MCF 10A (cell line): ENCODE measurements at regions of chr2 and their contacts with region 1.

Region 1: DNA sequence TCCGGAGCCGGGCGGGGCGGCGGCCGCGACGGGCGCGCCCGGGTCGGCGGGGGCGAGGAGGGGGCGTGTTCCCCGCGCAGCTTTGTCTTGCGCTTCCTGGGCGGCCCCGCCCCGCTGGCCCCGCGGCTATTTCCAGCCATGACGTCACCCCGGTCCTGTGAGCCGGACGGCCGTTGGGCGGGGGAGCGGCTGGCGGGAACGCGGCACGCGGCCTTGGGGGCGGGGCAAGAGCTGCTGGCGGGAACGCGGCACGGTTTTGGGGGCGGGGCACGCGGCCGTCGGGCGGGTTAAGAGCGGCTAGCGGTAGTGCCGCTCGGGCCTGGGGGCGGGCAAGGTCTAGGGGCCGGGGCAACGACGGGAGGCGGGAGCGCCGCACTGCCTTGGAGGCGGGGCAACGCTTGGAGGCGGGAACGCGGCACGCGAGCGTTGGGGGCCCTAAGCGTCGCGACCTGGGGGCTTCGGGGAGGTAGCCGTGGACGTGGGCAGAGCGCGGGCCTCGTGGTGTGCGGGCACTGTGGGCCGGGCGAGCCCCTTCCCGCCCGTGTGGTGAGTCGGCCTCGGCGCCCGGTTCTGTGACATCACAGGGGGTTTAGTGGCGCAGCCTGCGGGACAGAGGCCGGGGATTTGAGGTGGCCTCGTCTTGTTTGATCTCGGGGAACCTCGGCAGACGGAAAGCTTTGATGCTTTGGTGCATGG is 704 bp downstream of the KLF11 start:
- DNase-seq: peak; percentile 92
- H3K4me3 Mint-ChIP-seq: peak overlapping the region; percentile 73
- H3K27ac Mint-ChIP-seq: peak overlapping the region; percentile 75
- H3K4me1 Mint-ChIP-seq: peaks cover 4% of the 10 kb centered on the region
- H3K27me3 Mint-ChIP-seq: no peaks in the 10 kb centered on the region
- CTCF ChIP-seq: no peak

Region 2: GRCh38 chr2:9770308-9771100 is 273.6 kb before region 1 on chr2:
- CTCF ChIA-PET with region 1: interaction called, 11 read pairs
- POLR2A ChIA-PET with region 1: interaction called, 3 read pairs
- intact Hi-C with region 1: no loop called
- DNase-seq: peak; percentile 89
- H3K4me3 Mint-ChIP-seq: peak overlapping the region; percentile 39
- H3K27ac Mint-ChIP-seq: no peak overlapping the region
- H3K4me1 Mint-ChIP-seq: peaks cover 26% of the 10 kb centered on the region
- H3K27me3 Mint-ChIP-seq: no peaks in the 10 kb centered on the region
- CTCF ChIP-seq: peak; percentile 69

Region 3: DNA sequence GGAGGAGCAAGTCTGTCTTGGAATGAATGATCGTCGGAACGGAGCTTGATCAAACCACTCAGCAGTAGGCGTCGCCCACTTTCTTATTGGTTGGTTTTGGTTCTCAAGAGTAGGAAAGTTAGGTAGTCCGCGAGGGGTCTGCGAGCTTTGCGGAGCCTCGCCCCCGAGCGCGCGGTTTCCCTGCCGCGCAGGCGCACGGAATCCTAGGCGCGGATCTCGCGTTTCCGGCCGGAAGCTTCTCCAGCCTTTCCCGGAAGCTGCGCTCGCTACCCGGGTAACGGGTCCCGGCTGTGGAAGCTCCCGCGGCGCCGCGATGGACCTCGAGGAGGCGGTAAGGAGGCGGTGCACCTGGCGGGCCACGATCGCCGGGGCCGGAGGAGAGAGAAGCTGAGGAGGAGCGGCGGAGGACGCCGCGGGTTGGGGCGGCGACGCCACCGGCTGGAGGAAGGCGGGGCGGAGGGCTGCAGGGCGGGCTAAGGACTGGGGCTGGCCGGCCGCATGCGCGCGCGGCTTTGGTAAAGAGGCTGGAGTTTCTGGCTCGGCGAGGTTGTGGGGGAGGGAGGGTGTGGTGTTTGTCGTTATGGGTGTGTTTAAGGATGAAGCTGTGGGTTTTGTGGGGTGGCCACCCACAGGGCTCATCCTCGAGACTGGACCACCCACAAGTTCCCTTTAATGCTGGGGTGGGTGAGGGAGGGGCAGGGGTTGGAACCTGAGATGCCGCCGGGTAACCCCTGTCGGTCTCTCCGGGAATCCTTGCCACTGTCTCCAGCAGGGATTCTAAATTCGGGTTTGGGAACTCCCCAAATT is 200.6 kb before region 1 on chr2 and contains the start of gene TAF1B:
- CTCF ChIA-PET with region 1: interaction called, 4 read pairs
- POLR2A ChIA-PET with region 1: interaction called, 11 read pairs
- intact Hi-C with region 1: no loop called
- DNase-seq: peak; percentile 94
- H3K4me3 Mint-ChIP-seq: peak within 1 kb of the TSS; percentile 82
- H3K27ac Mint-ChIP-seq: peak within 1 kb of the TSS; percentile 92
- H3K4me1 Mint-ChIP-seq: peaks cover 40% of the 10 kb centered on the region
- H3K27me3 Mint-ChIP-seq: no peaks in the 10 kb centered on the region
- CTCF ChIP-seq: no peak
- total RNA-seq, gene TAF1B: 19.7 and 25.5 TPM in 2 replicates

Region 4: DNA sequence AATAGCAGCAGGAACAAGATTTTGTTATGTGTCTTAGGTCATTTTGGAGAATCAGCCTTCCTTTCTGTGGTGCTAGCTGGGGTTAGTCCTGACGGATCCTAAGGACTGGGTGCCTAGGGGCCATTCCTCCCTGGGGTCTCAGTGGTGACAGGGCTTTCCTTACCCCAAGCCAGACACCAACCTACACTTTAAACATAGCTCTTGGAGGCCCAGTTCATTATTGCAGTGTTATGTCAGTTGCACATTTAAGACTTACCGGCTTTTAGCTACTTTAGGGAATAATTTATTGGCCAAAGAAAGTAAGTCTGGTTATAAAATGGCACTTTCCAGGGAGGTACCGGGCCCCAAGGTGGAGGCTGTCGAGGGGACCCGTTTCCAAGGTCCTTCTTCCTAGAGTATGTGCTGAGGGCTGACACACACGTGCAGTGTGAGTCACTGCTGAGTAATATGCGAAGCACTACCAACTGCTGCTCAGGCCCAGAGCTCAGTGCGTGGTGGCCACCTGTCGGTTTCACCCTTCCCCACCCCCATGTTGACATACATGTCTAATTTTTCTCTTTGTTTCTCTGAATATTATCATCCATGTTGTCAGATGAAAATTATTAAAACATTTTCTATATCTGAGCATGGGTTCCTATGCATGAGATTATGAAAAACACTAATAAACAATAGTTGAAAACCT is 129.5 kb before region 1 on chr2:
- CTCF ChIA-PET with region 1: interaction called, 3 read pairs
- POLR2A ChIA-PET with region 1: interaction called, 3 read pairs
- intact Hi-C with region 1: loop called (anchors 1 kb)
- DNase-seq: peak; percentile 92
- H3K4me3 Mint-ChIP-seq: no peak overlapping the region
- H3K27ac Mint-ChIP-seq: peak overlapping the region; percentile 64
- H3K4me1 Mint-ChIP-seq: peaks cover 10% of the 10 kb centered on the region
- H3K27me3 Mint-ChIP-seq: no peaks in the 10 kb centered on the region
- CTCF ChIP-seq: peak; percentile 65

Region 5: GRCh38 chr2:9951272-9951972 is 92.6 kb before region 1 on chr2 and contains the start of gene GRHL1:
- CTCF ChIA-PET with region 1: no interaction called
- POLR2A ChIA-PET with region 1: no interaction called
- intact Hi-C with region 1: no loop called
- DNase-seq: peak; percentile 91
- H3K4me3 Mint-ChIP-seq: peak within 1 kb of the TSS; percentile 74
- H3K27ac Mint-ChIP-seq: no peak within 1 kb of the TSS
- H3K4me1 Mint-ChIP-seq: peaks cover 6% of the 10 kb centered on the region
- H3K27me3 Mint-ChIP-seq: no peaks in the 10 kb centered on the region
- CTCF ChIP-seq: no peak
- total RNA-seq, gene GRHL1: 0.96 and 2.0 TPM in 2 replicates

Region 6: DNA sequence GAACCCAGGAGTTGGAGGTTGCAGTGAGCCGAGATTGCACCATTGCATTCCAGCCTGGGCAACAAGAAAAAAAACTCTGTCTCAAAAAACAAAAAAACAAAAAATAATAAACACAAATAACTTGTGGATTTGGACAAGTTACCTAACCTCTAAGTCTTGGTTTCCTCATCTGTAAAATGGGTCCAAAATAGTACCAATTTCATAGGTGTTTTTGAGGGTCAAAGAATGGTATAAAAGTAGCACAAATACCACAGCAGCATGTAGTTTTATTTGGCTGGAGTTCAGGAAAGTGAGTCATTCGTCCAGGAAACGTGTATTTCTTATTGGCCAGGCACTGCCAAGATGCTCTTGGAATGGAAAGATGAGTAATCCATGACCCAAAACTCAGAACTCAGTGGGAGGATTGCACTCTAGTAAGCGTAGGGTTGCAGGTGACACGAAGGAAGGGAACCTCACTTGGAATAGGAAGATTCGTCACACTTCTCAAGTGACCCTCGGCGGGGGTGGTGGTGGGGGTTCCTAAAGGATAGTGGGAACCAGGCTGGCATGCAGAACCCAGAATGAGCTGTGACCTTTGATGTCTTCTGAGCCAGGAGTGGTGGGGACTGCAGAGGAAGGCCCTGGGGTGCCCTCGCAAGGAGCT is 68.1 kb before region 1 on chr2:
- CTCF ChIA-PET with region 1: interaction called, 81 read pairs
- POLR2A ChIA-PET with region 1: no interaction called
- intact Hi-C with region 1: loop called (anchors 1 kb)
- DNase-seq: peak; percentile 99
- H3K4me3 Mint-ChIP-seq: no peak overlapping the region
- H3K27ac Mint-ChIP-seq: no peak overlapping the region
- H3K4me1 Mint-ChIP-seq: peaks cover 30% of the 10 kb centered on the region
- H3K27me3 Mint-ChIP-seq: no peaks in the 10 kb centered on the region
- CTCF ChIP-seq: no peak

Region 7: DNA sequence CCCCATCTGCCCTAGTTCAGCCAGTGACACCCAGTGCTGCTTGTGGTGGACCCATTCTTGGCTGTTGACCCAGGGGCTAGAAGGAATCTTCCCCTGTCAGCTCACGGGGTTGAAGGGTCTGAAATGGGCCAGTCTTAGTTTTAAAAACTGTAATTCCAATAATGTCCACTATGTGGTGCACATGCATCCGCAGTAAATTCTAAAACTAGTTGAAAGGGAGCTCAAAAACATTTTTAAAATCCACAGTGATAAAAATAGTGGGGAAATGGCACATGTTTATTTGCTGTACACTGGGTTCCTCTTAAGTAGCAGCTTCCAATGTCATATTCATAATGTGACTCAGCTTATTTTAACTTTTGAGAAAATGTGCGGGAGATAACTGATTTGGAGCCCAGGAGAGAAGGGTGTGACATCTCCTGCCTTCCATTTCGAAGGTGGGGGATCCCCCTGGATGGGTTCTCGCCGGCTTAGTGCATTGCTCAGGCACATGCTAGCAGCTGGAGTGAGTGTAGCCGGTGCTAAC is 59.8 kb before region 1 on chr2:
- CTCF ChIA-PET with region 1: interaction called, 81 read pairs
- POLR2A ChIA-PET with region 1: interaction called, 5 read pairs
- intact Hi-C with region 1: loop called (anchors 1 kb)
- DNase-seq: peak; percentile 62
- H3K4me3 Mint-ChIP-seq: no peak overlapping the region
- H3K27ac Mint-ChIP-seq: no peak overlapping the region
- H3K4me1 Mint-ChIP-seq: no peaks in the 10 kb centered on the region
- H3K27me3 Mint-ChIP-seq: no peaks in the 10 kb centered on the region
- CTCF ChIP-seq: peak; percentile 63

Region 8: DNA sequence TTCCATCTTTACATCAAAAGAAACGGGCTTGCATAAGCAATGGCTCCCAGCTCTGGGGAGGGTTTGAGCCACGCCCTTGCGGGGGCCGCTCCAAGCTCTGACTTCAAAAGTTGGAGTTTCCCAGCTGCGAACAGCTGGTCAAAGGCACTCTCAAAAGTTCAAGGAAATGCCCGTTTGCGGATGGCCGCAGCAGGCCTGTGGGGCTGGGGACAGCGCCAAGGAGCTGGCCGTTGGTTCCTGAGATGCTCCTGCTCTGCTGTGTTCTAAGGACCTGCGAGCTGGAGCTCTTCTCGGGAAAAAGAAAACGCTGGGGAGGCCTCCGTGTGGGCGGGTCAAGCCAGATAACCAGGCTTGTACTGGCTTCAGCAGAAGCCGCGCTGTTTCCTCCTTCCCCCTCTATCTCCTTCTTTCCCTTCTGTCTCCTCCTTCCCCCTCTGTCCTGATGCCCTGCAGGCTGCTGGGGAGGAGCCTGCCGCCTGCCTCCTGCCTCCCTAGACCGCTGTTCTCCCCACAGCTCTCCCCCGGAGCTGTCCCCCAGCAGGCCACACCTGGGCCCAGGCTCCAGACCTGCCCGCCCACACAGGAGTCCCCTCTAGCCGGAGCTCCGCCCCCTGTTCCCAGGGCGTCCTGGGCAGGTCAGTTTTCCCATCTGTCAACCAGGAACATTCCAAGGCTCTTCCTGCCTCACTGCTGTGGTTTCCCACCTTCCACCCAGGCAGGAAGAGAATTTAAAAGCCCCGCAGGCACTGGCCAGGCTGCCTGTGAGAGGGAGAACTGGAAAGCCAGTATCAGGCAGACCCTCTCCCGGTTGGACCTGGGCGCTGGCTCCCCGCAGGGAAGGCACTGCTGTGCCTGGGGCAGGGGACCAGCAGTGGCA is 13.4 kb after region 1 on chr2:
- CTCF ChIA-PET with region 1: interaction called, 11 read pairs
- POLR2A ChIA-PET with region 1: interaction called, 3 read pairs
- intact Hi-C with region 1: no loop called
- DNase-seq: peak; percentile 70
- H3K4me3 Mint-ChIP-seq: peak overlapping the region; percentile 59
- H3K27ac Mint-ChIP-seq: peak overlapping the region; percentile 85
- H3K4me1 Mint-ChIP-seq: peaks cover 10% of the 10 kb centered on the region
- H3K27me3 Mint-ChIP-seq: no peaks in the 10 kb centered on the region
- CTCF ChIP-seq: no peak